Sciatic nerve (tissue), 2 donors: ENCODE measurements at regions of chr6 and their contacts with region 1.

Region 1: GRCh38 chr6:151349651-151350282 is 41.6 kb downstream of the ZBTB2 start:
- DNase-seq: no peak
- ATAC-seq: no peak

Region 2: DNA sequence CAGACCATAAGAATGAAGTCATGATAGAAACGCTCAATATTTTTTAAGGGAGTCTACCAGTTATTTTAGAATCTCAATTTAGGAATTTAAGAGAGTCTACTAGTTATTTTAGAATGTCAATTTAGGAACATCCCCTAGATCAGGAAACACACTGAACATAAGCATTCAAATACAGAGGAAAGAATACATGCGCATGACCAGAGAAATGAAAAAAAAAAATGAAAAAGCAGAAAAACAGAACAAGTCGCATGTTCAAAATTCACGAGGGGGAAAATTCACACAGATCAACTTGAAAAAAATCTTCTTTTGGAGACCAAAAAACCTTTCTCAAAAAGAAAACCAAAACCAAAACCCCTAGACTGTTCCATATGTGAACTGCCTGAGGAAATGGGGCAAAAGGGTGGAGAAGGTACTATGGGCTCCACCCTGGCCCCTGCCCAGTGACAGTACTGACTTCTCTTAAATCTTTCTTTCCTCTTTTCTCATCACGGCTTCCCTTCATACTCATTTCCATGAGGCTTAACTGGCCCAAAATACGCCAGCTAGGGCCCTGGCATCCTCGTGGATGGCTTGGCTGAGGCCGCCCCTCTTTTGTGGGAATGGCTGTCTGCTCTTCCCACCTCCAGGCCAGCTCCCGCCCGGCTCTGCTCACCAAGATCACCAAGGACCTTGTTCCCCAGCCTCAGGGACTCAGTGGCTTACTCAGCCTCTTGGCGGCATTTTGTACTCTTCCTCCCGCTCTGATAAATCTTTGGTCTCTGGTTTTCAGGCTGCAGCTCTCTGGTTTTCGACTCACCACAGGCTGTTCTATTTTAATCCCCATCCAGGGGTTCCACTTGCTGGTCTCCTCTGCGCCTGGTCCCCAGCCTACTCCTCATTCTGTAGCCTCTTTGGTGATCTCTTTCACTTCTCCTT is 30.4 kb after region 1 on chr6:
- intact Hi-C with region 1: loop called (anchors 1 kb)
- DNase-seq: no peak
- ATAC-seq: peak; percentile 62